Activated naive CD8-positive, alpha-beta T cell treated with anti-CD3 and anti-CD28 coated beads, Interleukin-2, amount 10 ng/mL, durations not matched to agents 7 days and 5 days (primary cell): ENCODE measurements at regions of chr22 and their contacts with region 1.

Region 1: GRCh38 chr22:50620593-50621355 is 7.2 kb downstream of the ARSA start:
- DNase-seq: peak; percentile 73
- ATAC-seq: peak; percentile 63
- H3K4me3 Mint-ChIP-seq: peak overlapping the region; percentile 84
- H3K27ac Mint-ChIP-seq: peak overlapping the region; percentile 99
- H3K4me1 Mint-ChIP-seq: peaks cover 42% of the 10 kb centered on the region
- H3K27me3 Mint-ChIP-seq: no peaks in the 10 kb centered on the region

Region 2: DNA sequence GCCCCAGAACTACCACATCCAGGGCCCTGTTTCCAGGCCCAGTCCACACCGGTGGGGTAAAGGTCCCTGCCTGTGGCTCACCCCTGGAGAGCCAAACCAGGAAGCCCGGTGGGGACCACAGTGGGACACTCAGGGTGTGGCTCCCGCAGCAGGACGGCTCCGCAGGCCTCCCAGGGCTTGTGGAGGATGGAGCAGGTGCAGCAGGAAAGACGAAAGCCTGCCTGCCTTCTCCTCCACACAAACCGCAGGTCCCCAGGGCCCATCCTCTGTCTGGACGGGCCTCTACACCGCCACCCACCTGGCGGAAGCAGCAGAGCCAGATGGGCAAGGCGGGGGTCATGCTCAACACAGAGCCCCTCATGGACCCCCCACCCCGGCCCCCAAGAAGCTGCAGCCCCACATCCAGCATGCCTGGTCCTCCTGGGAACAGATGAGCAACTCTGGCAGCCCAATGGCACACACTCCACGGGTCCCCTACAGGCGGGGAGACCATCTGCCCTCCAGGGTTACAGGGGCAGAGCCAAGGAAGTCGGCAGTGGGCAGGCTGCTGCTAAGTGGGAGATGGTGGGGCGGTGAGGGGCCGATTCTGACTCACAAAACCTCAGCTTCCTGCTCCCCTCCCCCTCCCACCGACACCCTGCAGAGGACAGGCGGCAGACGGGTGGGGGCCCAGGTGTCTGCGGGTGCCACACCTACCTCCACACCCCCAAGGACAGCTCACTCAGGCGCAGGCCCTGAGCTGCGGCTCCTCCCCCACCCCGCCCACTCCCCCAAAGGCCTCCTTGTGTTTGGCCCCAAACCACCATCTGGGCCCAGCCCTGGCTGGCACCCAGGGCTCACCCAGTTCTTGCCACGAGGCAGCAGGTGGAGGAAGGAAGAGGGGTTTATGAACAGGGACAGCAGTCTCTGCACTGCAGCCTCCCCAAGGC is 151.1 kb before region 1 on chr22:
- POLR2A ChIA-PET with region 1: interaction called, 21 read pairs
- DNase-seq: peak; percentile 91
- ATAC-seq: peak; percentile 77
- H3K4me3 Mint-ChIP-seq: peak overlapping the region; percentile 77
- H3K27ac Mint-ChIP-seq: peak overlapping the region; percentile 92
- H3K4me1 Mint-ChIP-seq: peaks cover 52% of the 10 kb centered on the region
- H3K27me3 Mint-ChIP-seq: no peaks in the 10 kb centered on the region

Region 3: DNA sequence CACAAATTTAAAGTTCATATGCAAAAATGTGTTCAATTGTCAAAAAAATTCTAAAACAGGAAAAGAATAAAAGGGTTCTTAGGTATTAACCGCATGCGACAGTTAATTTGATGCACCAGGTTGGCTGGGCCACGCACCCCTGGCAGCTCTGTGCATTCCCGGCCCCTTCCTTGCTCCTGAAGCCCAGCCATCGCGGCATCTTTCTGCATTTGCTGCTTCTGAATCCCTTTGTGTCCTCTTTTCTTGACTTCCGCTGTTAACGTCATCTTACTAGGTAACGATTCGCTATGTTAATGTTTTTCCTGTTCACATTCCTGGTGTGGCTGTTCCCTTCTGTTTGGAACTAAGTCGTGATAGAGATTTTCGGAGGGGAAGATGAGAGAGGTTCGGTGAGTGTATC is 83.0 kb before region 1 on chr22:
- POLR2A ChIA-PET with region 1: interaction called, 247 read pairs
- DNase-seq: no peak
- ATAC-seq: no peak
- H3K4me3 Mint-ChIP-seq: peak overlapping the region; percentile 52
- H3K27ac Mint-ChIP-seq: peak overlapping the region; percentile 100
- H3K4me1 Mint-ChIP-seq: peaks cover 62% of the 10 kb centered on the region
- H3K27me3 Mint-ChIP-seq: no peaks in the 10 kb centered on the region

Region 4: DNA sequence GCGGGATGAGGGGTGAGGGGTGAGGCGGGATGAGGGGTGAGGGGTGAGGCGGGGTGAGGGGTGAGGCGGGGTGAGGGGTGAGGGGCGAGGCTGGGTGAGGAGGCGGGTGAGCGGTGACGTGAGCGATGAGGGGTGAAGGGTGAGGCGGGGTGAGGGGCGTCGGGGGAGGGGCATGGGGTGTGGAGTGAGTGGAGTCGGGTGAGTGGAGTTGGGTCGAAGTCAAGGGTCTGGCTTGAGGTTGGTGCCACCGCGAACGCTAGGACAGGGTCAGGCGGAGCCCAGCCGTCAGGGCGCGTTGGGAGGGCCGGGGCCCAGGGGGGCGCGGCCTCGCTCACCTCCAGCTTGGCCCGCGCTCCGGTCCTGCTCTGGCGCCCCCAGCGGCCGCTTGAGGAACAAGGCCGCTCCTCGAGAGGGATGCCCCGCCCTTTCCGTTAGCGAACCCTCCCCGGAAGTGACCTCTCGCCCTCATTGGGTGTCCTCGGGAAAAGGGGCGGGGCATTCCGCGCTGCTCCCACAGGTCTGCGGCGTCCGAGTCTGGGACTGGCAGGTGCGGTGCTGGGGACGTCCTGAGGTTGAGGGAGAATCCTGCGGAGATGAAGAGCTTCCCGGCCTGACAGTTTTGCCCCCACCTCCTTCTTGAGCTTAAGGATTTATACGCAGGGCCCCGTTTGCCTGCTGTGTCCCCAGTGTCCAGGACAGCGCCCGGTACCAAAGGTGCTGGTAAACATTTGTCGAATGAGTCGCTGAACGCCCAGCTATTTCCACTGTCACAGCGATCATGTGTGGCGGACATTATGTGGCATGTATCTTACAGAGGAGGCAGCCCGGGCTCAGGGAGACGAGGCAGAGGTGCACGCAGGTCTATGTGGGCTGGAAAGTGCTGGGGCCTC is 58.0 kb before region 1 on chr22 and contains the start of gene SYCE3:
- POLR2A ChIA-PET with region 1: interaction called, 23 read pairs
- DNase-seq: peak; percentile 99
- ATAC-seq: peak; percentile 92
- H3K4me3 Mint-ChIP-seq: peak within 1 kb of the TSS; percentile 92
- H3K27ac Mint-ChIP-seq: peak within 1 kb of the TSS; percentile 91
- H3K4me1 Mint-ChIP-seq: peaks cover 14% of the 10 kb centered on the region
- H3K27me3 Mint-ChIP-seq: peaks cover 17% of the 10 kb centered on the region
- total RNA-seq, gene SYCE3: 0.79 to 1.1 TPM

Region 5: DNA sequence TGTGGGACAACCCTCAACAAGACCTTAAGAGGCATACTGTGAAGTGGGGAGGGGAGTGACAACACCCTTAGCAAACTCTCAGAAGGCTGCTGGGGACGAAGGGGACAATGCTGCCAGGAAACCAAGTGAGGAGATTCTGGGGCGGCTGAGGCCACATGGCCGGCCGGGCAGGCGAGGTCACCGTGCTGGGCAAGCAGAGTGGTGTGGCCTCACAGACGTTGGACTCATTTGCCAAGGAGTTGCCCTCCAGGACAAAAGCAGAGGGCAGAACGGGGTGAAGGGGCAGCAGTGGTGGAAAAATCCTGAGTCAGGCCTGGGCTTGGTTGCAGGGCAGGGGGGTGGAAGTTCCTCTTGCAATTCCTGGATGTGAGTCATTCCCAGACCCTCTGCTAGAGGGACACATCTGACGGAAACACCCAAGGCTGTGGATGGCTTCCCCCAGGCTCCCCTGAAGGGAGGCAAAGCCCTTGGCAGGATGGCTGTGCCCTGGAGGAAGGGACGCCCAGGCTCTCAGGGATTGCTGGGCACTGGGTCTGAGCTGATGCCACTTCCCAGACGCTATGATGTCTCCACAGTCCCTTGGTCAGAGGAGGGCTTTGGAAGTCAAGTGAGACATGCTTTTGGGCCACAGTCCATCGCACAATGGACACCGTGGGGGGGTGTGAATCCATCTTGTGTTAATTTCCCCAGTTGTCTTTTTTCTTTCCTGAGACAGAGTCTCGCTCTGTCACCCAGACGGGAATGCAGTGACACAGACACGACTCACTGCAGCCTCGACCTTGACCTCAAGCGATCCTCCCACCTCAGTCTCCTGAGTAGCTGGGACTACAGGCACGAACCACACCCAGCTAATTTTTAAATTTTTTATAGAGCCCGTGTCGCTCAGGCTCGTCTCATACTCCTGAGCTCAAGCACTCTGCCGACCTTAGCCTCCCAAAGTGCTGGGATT is 35.6 kb after region 1 on chr22:
- POLR2A ChIA-PET with region 1: no interaction called
- DNase-seq: no peak
- ATAC-seq: no peak
- H3K4me3 Mint-ChIP-seq: no peak overlapping the region
- H3K27ac Mint-ChIP-seq: no peak overlapping the region
- H3K4me1 Mint-ChIP-seq: no peaks in the 10 kb centered on the region
- H3K27me3 Mint-ChIP-seq: peaks cover 10% of the 10 kb centered on the region